Activated CD4-positive, alpha-beta T cell treated with anti-CD3 and anti-CD28 coated beads for 36 hours (primary cell): ENCODE measurements at regions of chr16 and their contacts with region 1.

Region 1: DNA sequence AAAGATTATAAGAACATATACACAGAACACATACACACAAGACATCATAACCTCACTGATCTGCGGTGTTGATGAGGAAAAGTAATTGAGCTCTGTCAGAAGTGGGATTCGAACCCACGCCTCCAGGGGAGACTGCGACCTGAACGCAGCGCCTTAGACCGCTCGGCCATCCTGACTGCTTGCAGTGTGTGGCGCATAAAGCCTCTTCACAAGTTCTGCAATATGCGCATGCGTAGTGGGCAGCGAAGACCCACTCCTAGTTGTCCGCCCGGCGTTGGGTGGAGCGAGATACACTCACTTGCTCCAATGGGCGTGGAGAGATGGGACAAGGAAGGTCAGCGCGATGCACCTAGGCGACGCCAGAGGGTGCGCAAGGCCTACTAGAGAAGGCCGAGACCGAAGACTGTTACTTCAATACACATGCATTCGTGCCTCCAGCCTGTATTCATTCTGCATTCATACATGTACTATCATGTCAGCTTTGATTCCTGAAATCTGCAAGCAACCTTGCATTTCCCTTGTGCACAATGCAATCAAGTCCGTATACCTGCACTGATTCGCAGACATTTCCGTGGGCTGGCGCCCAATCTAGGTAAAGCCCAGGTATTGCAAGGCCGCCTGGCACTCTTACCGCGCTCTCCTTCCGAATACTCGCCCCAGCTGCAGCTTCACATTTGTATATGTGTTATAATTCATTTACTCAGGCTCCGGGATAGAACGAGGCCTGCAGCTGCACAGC is 16.1 kb upstream of the PLLP start:
- DNase-seq: peak; percentile 99
- ATAC-seq: peak; percentile 89
- H3K4me3 Mint-ChIP-seq: no peak overlapping the region
- H3K27ac Mint-ChIP-seq: no peak overlapping the region
- H3K4me1 Mint-ChIP-seq: peaks cover 3% of the 10 kb centered on the region
- H3K27me3 Mint-ChIP-seq: no peaks in the 10 kb centered on the region

Region 2: DNA sequence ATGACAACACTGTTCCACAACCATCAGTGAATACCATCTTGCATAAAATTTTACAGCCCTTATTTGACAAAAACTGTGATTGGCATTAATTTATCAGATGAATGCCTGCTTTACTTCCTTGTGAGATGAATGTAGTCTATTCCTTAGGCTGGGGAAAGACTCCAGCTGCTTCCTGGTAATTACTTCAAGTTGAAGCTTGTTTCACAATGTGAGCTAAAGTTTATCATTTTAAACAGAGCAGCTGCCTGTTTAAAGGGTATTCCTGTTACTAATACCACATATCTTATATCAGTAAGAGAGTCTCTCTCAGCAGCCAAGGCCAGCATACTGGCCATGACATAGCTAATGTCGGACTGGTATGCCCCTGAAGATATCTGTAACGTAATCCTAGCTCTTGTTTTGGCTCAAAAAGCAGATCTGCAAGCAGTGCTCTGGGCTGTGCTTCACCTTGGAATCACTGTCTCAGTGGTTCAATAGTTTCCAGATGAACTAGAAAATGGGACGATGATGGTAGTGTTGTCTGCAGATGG is 68.7 kb before region 1 on chr16:
- CTCF ChIA-PET with region 1: no interaction called
- POLR2A ChIA-PET with region 1: no interaction called
- intact Hi-C with region 1: no loop called
- DNase-seq: no peak
- ATAC-seq: no peak
- H3K4me3 Mint-ChIP-seq: no peak overlapping the region
- H3K27ac Mint-ChIP-seq: no peak overlapping the region
- H3K4me1 Mint-ChIP-seq: peaks cover 9% of the 10 kb centered on the region
- H3K27me3 Mint-ChIP-seq: no peaks in the 10 kb centered on the region

Region 3: GRCh38 chr16:57244767-57245471 is 55.6 kb before region 1 on chr16 and contains the start of gene ARL2BP:
- CTCF ChIA-PET with region 1: interaction called, 9 read pairs
- POLR2A ChIA-PET with region 1: no interaction called
- intact Hi-C with region 1: loop called (anchors 1 kb)
- DNase-seq: peak; percentile 99
- ATAC-seq: peak; percentile 97
- H3K4me3 Mint-ChIP-seq: peak within 1 kb of the TSS; percentile 86
- H3K27ac Mint-ChIP-seq: peak within 1 kb of the TSS; percentile 92
- H3K4me1 Mint-ChIP-seq: peaks cover 19% of the 10 kb centered on the region
- H3K27me3 Mint-ChIP-seq: no peaks in the 10 kb centered on the region
- total RNA-seq, gene ARL2BP: 9.9 to 11.1 TPM

Region 4: GRCh38 chr16:57377080-57377841 is 76.7 kb after region 1 on chr16:
- CTCF ChIA-PET with region 1: interaction called, 6 read pairs
- POLR2A ChIA-PET with region 1: no interaction called
- intact Hi-C with region 1: loop called in 1 of 2 experiments (anchors 1 kb)
- DNase-seq: peak; percentile 70
- ATAC-seq: peak; percentile 90
- H3K4me3 Mint-ChIP-seq: no peak overlapping the region
- H3K27ac Mint-ChIP-seq: no peak overlapping the region
- H3K4me1 Mint-ChIP-seq: peaks cover 16% of the 10 kb centered on the region
- H3K27me3 Mint-ChIP-seq: peaks cover 2% of the 10 kb centered on the region

Region 5: DNA sequence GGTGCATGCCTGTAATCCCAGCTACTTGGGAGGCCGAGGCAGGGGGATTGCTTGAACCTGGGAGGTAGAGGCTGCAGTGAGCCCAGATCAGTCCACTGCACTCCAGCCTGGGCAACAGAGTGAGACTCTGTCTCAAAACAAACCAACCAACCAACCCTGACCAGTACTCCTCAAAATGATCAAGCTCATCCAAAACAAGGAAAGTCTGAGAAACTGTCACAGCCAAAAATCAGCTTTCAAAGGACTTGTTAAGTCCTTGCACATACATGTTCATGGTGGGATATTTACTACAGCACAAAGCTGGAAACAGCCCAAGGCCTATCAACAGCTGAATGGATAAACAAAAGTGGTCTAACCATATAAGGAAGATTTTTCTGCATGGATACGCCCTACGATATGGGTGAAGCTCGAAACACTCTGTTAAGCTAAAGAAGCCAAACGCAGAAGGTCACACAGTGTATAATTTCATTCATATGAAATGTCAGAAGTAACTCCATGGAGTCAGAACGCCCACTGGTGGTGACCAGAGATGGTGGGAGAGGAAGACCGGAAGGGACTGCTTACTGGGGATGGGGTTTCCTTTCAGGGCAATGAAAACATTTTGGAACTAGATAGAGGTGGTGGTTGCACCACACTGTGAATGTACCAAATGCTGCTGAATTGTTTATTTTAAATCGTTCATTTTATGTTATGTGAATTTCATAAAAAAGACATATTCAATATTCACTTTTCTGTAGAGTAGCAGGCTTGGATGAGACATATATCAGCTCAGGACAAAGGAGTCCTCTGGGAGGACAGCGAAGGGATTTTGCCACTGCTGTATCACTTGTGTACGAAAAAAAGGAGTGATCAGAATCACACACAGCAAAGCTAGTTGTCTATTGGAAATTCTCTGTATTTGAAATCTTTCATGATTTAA is 121.7 kb after region 1 on chr16:
- CTCF ChIA-PET with region 1: interaction called, 129 read pairs
- POLR2A ChIA-PET with region 1: interaction called, 3 read pairs
- intact Hi-C with region 1: loop called (anchors 1 kb)
- DNase-seq: no peak
- ATAC-seq: no peak
- H3K4me3 Mint-ChIP-seq: no peak overlapping the region
- H3K27ac Mint-ChIP-seq: no peak overlapping the region
- H3K4me1 Mint-ChIP-seq: peaks cover 12% of the 10 kb centered on the region
- H3K27me3 Mint-ChIP-seq: no peaks in the 10 kb centered on the region

Region 6: DNA sequence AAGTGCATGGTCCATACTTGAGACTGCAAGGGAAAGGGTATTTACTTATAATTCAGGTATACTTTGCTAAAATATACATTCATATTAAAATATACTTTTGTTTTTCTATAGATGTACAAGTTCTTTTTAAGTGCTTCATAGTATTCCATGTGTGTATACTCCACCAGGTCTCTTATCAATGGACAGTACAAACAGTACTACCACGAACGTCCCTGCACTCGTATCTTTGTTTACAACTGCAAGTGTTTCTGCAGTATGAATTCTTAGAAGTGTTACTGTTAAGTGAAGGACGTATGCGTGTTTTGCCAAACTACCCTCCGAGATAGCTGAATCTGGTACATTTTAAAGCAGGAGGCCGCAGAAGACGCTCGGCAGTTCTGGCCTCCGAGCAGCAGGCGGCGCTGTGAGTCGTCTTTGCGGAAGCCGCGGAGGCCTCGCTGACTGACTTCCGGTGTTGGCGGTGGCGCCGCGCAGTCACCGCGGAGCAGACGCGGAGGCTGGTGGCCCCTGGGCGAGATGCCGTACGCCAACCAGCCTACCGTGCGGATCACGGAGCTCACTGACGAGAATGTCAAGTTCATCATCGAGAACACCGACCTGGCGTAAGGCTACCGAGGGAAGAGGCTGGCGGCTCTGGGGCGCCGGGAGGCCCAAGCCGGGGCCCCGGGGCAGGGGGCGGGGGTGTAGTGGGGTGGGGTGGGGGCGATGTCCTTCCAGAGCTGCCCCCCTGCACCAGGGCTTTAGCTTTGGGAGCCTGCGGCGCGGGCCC is 161.8 kb after region 1 on chr16 and contains the start of gene POLR2C:
- CTCF ChIA-PET with region 1: interaction called, 4 read pairs
- POLR2A ChIA-PET with region 1: no interaction called
- intact Hi-C with region 1: loop called in 1 of 2 experiments (anchors 1 kb)
- DNase-seq: peak; percentile 96
- ATAC-seq: peak; percentile 96
- H3K4me3 Mint-ChIP-seq: peak within 1 kb of the TSS; percentile 90
- H3K27ac Mint-ChIP-seq: peak within 1 kb of the TSS; percentile 99
- H3K4me1 Mint-ChIP-seq: peaks cover 24% of the 10 kb centered on the region
- H3K27me3 Mint-ChIP-seq: no peaks in the 10 kb centered on the region
- total RNA-seq, gene POLR2C: 54.3 to 57.1 TPM

Region 7: DNA sequence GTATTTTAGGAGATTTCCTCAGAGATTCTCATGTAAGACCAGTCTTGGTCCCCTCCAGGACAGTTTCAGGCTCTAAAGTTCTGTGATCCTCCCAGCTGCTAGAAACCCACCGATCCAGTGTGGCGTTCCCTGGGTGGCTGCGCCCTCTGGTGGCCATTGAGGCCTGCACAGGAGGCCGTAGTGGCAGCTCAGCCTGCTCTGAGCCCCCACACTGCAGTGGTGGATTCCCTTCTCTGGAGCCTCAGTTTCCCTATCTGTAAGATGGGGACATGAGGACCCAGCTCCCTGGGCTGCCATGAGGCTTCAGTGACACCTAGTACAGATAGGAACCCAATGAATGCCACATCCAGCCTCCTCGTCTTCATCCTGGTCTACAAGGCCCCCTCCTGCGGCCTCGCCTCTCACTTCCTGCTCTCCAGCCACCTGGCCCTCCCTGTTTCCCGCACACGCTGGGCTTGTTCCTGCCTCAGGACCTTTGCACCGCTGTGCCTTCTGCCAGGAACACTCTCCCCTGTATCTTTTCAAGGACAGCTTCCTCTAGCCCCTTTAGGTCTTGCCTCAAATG is 219.3 kb after region 1 on chr16:
- CTCF ChIA-PET with region 1: interaction called, 3 read pairs
- POLR2A ChIA-PET with region 1: no interaction called
- intact Hi-C with region 1: loop called (anchors 1 kb)
- DNase-seq: peak; percentile 90
- ATAC-seq: peak; percentile 96
- H3K4me3 Mint-ChIP-seq: no peak overlapping the region
- H3K27ac Mint-ChIP-seq: no peak overlapping the region
- H3K4me1 Mint-ChIP-seq: peaks cover 4% of the 10 kb centered on the region
- H3K27me3 Mint-ChIP-seq: no peaks in the 10 kb centered on the region